IMR-90 (cell line): ENCODE measurements at regions of chr2 and their contacts with region 1.

Region 1: DNA sequence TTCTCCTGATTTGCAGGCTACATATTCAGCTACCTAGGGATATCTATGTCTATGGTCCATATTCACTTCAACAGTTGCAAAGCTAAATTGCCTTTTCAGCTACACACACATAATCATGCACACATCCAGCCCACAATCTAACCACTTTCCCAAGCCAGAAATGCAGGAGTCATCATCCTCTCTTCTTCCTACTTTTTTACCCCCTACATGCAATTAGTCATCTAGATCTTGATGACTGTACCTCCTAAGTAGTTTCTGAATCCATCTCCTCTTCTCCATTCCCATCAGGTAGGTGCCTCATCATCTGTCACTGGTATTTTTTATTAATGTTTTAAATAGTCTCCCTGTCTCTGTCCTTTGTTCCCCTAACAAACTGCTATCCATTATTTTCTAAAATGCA is 23.7 kb upstream of the SPRED2 start:
- DNase-seq: peak; percentile 72
- ATAC-seq: peak; percentile 11; the same call in 1 of the 2 replicates
- H3K4me3 ChIP-seq: no peak overlapping the region
- H3K27ac ChIP-seq: no peak overlapping the region
- H3K4me1 ChIP-seq: no peaks in the 10 kb centered on the region
- H3K27me3 ChIP-seq: peaks cover 5% of the 10 kb centered on the region; the same call in 1 of the 2 replicates
- CTCF ChIP-seq: no peak
- POLR2A ChIP-seq: no peak
- RAD21 ChIP-seq: no peak

Region 2: DNA sequence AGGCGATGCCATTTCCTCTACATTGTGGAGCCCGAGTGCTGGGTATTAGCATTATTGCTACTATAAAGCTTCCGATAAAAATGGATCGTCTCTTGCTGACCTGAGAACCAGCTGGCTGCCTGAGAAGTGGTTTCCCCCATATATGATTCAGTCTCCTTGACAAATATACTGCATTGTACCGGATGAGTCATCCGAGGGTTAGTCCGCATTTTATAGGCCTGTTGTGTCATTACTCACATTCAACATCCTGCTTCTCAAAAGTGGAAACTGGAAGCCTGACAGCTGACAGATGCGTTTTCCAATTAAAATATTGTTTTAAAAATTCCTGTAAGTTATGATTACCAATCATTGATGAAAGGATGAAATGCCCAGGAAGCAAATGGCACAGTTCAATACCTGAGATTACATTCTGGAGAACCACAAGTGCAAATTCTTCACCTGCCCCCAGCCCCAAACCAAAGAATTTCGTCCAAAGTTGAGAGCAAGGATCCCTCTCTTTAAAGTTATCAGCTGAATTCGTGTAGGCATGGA is 89.4 kb before region 1 on chr2:
- CTCF ChIA-PET with region 1: no interaction called
- POLR2A ChIA-PET with region 1: no interaction called
- dilution Hi-C with region 1: no loop called
- in situ Hi-C with region 1: no loop called
- intact Hi-C with region 1: no loop called
- DNase-seq: peak; percentile 98
- ATAC-seq: peak; percentile 68
- H3K4me3 ChIP-seq: no peak overlapping the region
- H3K27ac ChIP-seq: peak overlapping the region; percentile 21; the same call in 1 of the 2 replicates
- H3K4me1 ChIP-seq: peaks cover 21% of the 10 kb centered on the region
- H3K27me3 ChIP-seq: no peaks in the 10 kb centered on the region
- CTCF ChIP-seq: no peak
- POLR2A ChIP-seq: peak; percentile 63; the same call in 1 of the 2 replicates
- RAD21 ChIP-seq: no peak

Region 3: GRCh38 chr2:65479524-65479923 is 23.5 kb after region 1 on chr2:
- CTCF ChIA-PET with region 1: no interaction called
- POLR2A ChIA-PET with region 1: interaction called, 13 read pairs
- dilution Hi-C with region 1: no loop called
- in situ Hi-C with region 1: no loop called
- intact Hi-C with region 1: no loop called
- DNase-seq: no peak
- ATAC-seq: no peak
- H3K4me3 ChIP-seq: no peak overlapping the region
- H3K27ac ChIP-seq: no peak overlapping the region
- H3K4me1 ChIP-seq: no peaks in the 10 kb centered on the region
- H3K27me3 ChIP-seq: no peaks in the 10 kb centered on the region; the same call in none of the 2 replicates
- CTCF ChIP-seq: no peak
- POLR2A ChIP-seq: no peak
- RAD21 ChIP-seq: no peak

Region 4: DNA sequence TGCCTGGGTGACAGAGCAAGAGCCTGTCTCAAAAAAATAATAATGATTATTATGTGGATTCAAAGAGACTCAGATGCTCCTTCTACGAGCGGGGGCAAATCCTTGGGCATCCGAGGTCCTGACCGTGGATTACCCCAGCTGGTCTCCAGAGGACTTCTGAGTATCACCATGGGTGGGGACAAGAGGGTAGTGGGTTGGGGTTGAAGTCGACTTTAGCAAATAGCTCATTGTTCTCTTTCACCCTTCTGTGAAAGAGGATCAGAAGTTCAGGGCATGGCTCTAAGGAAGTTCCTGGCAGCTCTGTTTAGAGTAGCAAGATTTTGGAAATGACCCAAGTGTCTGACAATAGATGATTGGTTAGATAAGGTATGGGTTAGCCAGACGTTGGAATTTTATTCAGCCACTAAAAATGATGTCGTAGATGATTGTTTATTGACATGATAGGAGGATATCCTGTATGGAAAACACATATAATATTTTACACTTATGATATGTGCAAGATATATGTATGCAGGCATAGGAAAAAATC is 35.4 kb after region 1 on chr2:
- CTCF ChIA-PET with region 1: no interaction called
- POLR2A ChIA-PET with region 1: no interaction called
- dilution Hi-C with region 1: no loop called
- in situ Hi-C with region 1: no loop called
- intact Hi-C with region 1: loop called (anchors 5 kb)
- DNase-seq: no peak
- ATAC-seq: no peak
- H3K4me3 ChIP-seq: no peak overlapping the region
- H3K27ac ChIP-seq: no peak overlapping the region
- H3K4me1 ChIP-seq: no peaks in the 10 kb centered on the region
- H3K27me3 ChIP-seq: peaks cover 4% of the 10 kb centered on the region; the same call in 1 of the 2 replicates
- CTCF ChIP-seq: no peak
- POLR2A ChIP-seq: no peak
- RAD21 ChIP-seq: no peak